PC-9 (cell line): ENCODE measurements at regions of chr1 and their contacts with region 1.

Region 1: DNA sequence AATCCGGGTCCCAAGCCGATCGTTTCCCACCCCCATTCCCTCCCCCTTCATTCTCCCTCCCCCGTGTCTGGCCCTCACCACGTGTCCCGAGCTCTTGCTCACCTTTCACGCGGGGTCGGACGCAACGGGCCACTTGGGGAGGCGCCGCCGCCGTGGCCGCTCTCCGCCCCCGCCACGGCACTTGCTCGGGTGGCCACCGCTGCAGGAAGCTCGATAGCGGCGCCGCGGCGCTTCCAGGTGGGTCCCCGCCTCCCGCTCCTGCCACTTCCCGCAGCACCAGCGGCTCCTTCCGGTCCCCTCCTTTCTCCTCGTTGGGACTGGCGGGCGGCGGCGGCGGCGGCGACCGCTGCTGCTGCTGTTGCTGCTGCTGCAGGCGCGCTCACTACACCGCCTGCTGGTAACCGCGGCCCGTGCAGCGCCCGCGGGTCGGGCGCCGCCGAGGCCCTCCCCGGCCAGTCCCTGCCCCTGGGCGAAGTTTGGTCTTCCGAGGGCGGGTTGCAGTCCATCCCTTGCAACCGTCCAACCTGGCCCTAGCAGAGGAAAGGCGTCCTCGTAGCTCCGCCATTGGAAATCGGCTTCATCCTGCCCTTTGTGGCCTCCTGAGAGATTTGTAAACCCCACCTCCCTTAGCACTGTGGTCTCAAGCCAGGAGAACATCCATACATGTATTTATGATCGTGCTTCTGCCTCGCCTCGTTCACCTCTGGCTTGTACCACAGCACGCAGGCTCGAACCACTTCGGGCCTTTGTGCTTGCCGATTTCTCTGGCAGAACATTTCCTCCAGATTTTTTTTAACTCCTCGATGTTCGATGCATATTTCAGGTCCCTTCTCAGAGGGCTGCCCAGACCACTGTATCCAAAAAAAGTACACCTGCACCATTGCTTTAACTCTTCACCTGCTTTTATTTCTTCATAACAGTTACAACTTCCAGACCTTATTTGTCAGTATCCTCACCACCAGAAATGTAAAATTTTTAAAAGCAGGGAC is 996 bp upstream of the ZZZ3 start:
- DNase-seq: peak; percentile 89 to 93
- H3K4me3 ChIP-seq: peak overlapping the region; percentile 92
- H3K27ac ChIP-seq: peak overlapping the region; percentile 96
- H3K4me1 ChIP-seq: peaks cover 31% of the 10 kb centered on the region
- H3K27me3 ChIP-seq: no peaks in the 10 kb centered on the region
- CTCF ChIP-seq: peak; percentile 84

Region 2: DNA sequence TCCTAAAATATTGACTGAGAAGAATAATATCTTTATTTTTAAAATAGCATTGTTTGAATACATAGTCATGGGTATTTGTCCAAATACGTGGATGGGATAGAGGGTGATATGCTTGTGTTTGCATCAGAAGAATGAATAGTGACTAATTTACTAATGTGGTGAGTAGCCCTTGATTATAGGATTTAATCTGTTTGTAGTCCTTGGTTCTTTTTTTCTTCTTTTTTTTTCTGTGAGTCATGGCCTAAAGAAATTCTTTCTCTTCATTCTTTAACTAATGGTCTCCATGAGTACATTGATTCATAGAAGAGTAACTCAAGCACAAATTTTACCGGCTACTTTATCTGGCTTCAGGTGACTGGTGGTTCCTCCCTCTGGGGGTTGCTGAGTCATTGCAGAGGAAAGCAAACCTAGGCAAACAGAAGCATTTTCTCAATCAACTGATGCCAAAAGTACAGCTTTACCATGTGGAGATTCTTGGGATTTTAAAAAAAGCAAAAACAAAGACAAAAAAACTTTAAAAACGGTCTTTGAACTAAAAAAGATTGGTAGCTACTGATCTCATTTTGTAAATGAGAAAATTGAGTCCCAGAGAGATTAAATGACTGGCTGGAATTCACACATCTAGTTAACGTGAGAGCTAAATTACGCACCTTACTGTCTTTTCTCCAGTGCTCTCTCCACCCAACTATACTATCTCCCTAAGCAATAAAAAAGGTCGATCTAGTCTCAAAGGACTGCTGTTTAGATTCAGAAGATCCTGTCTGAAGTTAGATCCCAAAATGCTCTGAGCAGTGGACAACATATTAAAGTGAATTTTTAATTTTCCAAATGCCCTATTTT is 361.2 kb before region 1 on chr1:
- CTCF ChIA-PET with region 1: no interaction called
- POLR2A ChIA-PET with region 1: no interaction called
- intact Hi-C with region 1: loop called (anchors 2 kb)
- DNase-seq: peak; percentile 64 to 99
- H3K4me3 ChIP-seq: peak overlapping the region; percentile 28; the same call in 1 of the 2 replicates
- H3K27ac ChIP-seq: peak overlapping the region; percentile 91
- H3K4me1 ChIP-seq: peaks cover 30% of the 10 kb centered on the region
- H3K27me3 ChIP-seq: no peaks in the 10 kb centered on the region
- CTCF ChIP-seq: no peak

Region 3: DNA sequence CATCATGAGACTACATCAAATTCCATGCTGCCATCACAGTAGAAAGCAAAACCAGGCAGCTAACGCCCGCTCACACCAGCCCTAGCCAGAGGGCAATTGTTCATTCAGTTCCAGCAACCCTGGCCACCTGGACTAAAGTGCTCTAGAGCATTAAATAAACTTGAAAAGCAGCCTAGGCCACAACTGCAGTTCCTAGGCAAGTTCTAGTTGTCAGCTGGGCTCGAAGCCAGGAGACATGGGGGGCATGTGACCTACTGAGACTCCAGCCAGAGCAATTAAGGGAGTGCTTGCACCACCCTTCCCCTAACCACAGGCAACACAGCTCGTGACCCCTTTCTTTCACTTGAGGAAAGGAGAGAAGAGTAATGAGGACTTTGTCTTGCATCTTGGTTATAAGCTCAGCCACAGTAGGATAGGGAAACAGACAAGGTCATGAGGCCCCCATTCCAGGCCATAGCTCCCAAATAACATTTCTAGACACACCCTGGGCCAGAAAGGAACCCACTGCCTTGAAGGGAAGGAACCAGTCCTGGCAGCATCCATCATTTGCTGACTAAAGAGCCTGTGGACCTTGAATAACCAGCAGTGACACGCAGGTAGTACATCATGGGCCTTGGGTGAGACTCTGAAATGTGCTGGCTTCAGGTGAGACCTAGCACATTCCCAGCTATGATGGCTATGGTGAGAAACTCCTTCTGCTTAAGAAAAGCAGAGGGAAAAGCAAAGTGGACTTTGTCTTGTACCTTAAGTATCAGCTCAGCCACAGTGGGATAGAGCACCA is 78.0 kb before region 1 on chr1:
- CTCF ChIA-PET with region 1: no interaction called
- POLR2A ChIA-PET with region 1: no interaction called
- intact Hi-C with region 1: loop called (anchors 5 kb)
- DNase-seq: peak; percentile 68 to 76
- H3K4me3 ChIP-seq: no peak overlapping the region
- H3K27ac ChIP-seq: peak overlapping the region; percentile 14; the same call in 1 of the 2 replicates
- H3K4me1 ChIP-seq: peaks cover 18% of the 10 kb centered on the region; the same call in 1 of the 2 replicates
- H3K27me3 ChIP-seq: no peaks in the 10 kb centered on the region
- CTCF ChIP-seq: no peak

Region 4: DNA sequence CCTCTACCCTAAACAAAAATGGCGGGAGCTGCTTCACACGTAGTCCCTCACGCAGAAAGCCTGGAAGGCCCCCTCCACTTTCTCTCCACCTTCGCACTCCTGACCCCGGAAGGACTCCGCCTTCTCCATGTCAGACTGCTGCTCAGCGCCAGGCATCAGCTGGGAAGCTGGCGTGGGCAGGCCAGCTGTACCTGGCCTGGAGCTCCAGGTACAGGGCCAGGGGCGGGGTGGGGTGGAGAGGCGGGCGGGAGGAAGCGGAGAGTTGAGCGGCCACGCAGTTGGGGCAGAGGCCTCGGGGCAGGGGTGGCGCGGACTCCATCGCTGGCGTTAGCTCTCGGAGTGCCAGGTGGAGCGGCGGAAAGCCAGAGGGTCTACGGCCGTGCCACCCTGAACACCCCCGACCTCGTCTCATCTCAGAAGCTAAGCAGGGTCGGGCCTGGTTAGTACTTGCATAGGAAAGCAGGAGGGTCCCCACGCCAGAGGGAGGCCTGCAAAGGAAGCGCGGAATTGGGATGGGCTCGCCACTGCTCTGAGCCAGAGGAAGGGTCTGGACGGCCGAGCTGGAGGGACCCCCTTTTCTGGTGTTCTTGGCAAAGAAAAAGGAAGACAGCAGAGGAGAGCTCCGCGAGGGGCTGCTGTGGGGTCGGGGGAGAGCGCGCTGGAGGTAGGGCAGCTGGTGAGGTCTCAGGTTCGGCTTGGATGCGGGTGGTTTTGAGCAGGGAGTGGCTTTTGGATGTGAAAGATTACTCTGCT is 96.3 kb after region 1 on chr1 and contains the start of gene MIGA1:
- CTCF ChIA-PET with region 1: no interaction called
- POLR2A ChIA-PET with region 1: interaction called, 12 read pairs
- intact Hi-C with region 1: no loop called
- DNase-seq: peak; percentile 85 to 92
- H3K4me3 ChIP-seq: peak within 1 kb of the TSS; percentile 88
- H3K27ac ChIP-seq: peak within 1 kb of the TSS; percentile 27
- H3K4me1 ChIP-seq: peaks cover 19% of the 10 kb centered on the region
- H3K27me3 ChIP-seq: no peaks in the 10 kb centered on the region
- CTCF ChIP-seq: no peak
- total RNA-seq, gene MIGA1: 11.5 TPM in 2 replicates

Region 5: GRCh38 chr1:78070758-78071157 is 387.3 kb after region 1 on chr1:
- CTCF ChIA-PET with region 1: no interaction called
- POLR2A ChIA-PET with region 1: interaction called, 18 read pairs
- intact Hi-C with region 1: no loop called
- DNase-seq: peak in 1 of 2 experiments; percentile 88
- H3K4me3 ChIP-seq: no peak overlapping the region
- H3K27ac ChIP-seq: peak overlapping the region; percentile 46
- H3K4me1 ChIP-seq: peaks cover 18% of the 10 kb centered on the region; the same call in 1 of the 2 replicates
- H3K27me3 ChIP-seq: no peaks in the 10 kb centered on the region
- CTCF ChIP-seq: no peak